H1 (cell line): ENCODE measurements at regions of chr1 and their contacts with region 1.

Region 1: DNA sequence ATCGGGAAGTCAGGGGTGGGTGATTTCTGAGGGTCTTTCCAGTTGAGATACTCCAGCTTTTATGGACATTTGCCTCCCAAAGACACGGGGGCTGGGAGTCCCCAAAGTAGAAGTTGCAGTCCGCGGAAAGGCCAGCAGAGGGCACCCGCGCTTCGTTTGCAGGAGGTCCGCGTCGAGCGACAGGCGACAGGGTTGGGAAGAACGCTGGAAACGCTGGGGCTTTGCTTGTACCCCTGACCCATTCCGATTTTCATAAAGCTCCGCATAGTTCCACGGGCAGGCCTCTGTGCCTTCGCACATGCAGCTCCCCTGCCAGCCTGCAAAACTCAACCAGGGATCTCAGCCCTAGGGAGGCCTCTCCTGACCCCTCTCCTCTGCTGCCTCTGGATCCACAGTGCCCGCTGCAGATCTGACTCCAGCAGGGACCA is 44.2 kb upstream of the LAPTM5 start:
- DNase-seq: peak in 1 of 2 experiments; percentile 99
- H3K4me3 ChIP-seq: peak overlapping the region in 1 of 4 experiments; percentile 43; a peak in 4 of 8 replicates
- H3K27ac ChIP-seq: no peak overlapping the region
- H3K4me1 ChIP-seq: peaks cover 10 to 30% (median 17%) of the 10 kb centered on the region in 4 experiments
- H3K27me3 ChIP-seq: peaks cover 0 to 13% (median 4%) of the 10 kb centered on the region in 4 experiments; a peak in 2 of 7 replicates
- CTCF ChIP-seq: peak; percentile 94 to 96 (median 95)
- EP300 ChIP-seq: no peak
- POLR2A ChIP-seq: no peak
- RAD21 ChIP-seq: peak; percentile 97 to 100

Region 2: GRCh38 chr1:30724175-30724574 is 77.6 kb before region 1 on chr1:
- CTCF ChIA-PET with region 1: interaction called, 48 read pairs
- POLR2A ChIA-PET with region 1: interaction called, 3 read pairs
- DNase-seq: no peak
- H3K4me3 ChIP-seq: no peak overlapping the region
- H3K27ac ChIP-seq: no peak overlapping the region
- H3K4me1 ChIP-seq: peaks cover 0 to 9% (median 2%) of the 10 kb centered on the region in 4 experiments; a peak in 4 of 7 replicates
- H3K27me3 ChIP-seq: no peaks in the 10 kb centered on the region; a peak in 1 of 7 replicates
- CTCF ChIP-seq: peak in 2 of 3 experiments; percentile 21 to 52; a peak in 1 of 4 replicates
- EP300 ChIP-seq: no peak
- POLR2A ChIP-seq: no peak
- RAD21 ChIP-seq: peak in 1 of 2 experiments; percentile 3; a peak in 1 of 4 replicates

Region 3: DNA sequence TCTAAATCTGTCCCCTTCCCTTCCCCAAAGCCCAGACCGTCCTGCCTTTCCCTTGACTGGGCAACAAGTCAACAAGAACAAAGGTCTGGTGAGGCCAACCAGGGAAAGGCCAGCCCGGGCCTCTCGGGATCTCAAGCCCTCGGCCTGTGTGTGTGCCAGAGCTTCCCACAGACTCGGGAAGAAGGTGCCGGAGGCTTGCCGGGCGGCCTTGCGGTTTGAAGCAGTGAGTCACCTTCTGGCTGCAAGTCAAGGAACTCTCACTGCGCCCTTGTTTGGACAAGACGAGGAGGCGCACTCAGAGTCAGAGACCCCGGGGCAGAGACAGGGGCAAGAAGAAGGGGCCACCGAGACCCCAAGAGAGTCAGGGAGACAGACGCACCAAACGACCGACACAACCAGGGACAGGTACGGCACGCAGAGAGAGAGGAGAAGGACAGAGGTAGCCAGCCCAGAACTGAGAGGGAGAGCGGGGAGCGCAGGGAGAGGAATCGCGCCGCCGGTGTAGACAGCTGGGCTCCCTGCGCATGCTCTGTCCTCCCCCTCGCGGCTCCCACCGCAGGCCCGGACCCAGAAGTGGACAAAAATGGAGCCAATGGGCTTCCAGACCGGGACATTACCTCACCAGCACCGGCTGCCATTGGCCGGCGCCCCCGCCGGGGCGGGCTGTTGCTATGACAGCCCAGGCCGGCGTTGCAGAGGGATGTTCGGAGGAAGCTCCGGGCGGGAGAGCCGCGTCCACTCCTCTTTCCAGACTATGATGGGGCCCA is 22.4 kb after region 1 on chr1:
- CTCF ChIA-PET with region 1: interaction called, 158 read pairs
- POLR2A ChIA-PET with region 1: interaction called, 6 read pairs
- DNase-seq: peak; percentile 85 to 95
- H3K4me3 ChIP-seq: peak overlapping the region; percentile 43 to 68 (median 53)
- H3K27ac ChIP-seq: no peak overlapping the region
- H3K4me1 ChIP-seq: peaks cover 0 to 13% (median 8%) of the 10 kb centered on the region in 4 experiments; a peak in 6 of 7 replicates
- H3K27me3 ChIP-seq: peaks cover 0 to 17% (median 13%) of the 10 kb centered on the region in 4 experiments; a peak in 5 of 7 replicates
- CTCF ChIP-seq: peak in 1 of 3 experiments; percentile 2; a peak in 1 of 4 replicates
- EP300 ChIP-seq: no peak
- POLR2A ChIP-seq: no peak
- RAD21 ChIP-seq: peak in 1 of 2 experiments; percentile 15; a peak in 1 of 4 replicates

Region 4: DNA sequence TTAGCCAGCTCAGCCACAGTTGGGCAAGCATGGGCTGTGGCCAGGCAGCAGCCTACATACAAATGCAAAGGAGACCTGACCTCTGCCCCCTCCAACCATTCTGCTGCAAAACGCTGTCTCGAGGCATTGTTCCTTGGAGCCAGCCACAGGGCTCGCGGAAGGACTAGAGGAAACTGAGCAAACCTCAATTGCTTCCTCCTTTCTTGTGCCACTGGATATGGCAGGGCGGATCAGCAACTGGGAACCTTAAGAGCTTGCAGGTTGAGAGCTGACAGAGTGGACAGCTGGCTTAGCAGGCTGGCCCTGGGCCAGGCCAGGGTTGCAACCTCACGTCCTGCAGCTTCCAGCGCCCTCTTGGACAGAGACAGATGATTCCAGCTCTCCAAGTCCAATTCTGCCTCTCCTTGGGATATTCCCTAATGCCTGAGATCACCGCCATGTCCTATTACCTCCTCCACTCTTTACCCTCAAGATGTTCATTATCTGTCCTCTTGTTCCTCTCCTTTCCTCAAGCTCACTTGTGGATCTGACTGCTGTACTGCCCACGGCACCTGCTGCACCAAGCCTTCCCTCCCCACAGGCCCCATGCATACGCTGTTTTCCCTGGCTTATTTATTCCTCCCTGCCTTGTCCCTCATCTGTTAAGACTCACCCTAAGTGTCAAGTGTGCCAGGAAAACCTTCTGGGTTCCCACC is 39.3 kb after region 1 on chr1:
- CTCF ChIA-PET with region 1: interaction called, 52 read pairs
- POLR2A ChIA-PET with region 1: no interaction called
- DNase-seq: no peak
- H3K4me3 ChIP-seq: peak overlapping the region in 1 of 4 experiments; percentile 3; a peak in 1 of 8 replicates
- H3K27ac ChIP-seq: no peak overlapping the region
- H3K4me1 ChIP-seq: peaks cover 16 to 25% (median 18%) of the 10 kb centered on the region in 4 experiments
- H3K27me3 ChIP-seq: no peaks in the 10 kb centered on the region
- CTCF ChIP-seq: no peak
- EP300 ChIP-seq: no peak
- POLR2A ChIP-seq: no peak
- RAD21 ChIP-seq: no peak

Region 5: DNA sequence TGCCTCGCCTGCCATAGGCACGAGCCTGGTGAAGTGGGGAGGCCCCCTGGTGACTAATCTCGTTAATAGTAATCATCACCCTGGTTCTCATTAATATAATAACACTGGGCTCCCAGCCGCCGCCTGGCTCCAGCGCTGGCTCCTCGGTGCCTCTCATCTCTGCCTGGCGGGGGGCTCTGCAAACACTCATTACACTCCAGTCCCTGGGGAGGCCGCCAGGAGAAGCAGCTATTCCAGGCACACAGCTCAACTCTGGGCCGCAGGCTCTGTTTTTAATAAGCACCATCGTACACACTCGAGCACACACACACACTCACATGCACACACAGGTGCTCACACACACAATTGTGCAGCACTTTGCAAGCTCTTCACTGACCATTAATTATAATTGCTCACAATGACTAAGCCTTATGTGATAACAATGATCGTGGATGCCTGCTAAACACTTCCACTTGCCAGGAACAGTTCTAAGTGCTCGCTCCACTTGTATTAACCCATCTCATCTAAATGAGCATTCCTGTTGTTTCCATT is 54.5 kb after region 1 on chr1:
- CTCF ChIA-PET with region 1: interaction called, 57 read pairs
- POLR2A ChIA-PET with region 1: interaction called, 4 read pairs
- DNase-seq: no peak
- H3K4me3 ChIP-seq: no peak overlapping the region
- H3K27ac ChIP-seq: no peak overlapping the region
- H3K4me1 ChIP-seq: peaks cover 15 to 33% (median 24%) of the 10 kb centered on the region in 4 experiments
- H3K27me3 ChIP-seq: no peaks in the 10 kb centered on the region
- CTCF ChIP-seq: no peak
- EP300 ChIP-seq: no peak
- POLR2A ChIP-seq: no peak
- RAD21 ChIP-seq: no peak

Region 6: GRCh38 chr1:30877205-30877912 is 75.6 kb after region 1 on chr1:
- CTCF ChIA-PET with region 1: interaction called, 41 read pairs
- POLR2A ChIA-PET with region 1: interaction called, 3 read pairs
- DNase-seq: no peak
- H3K4me3 ChIP-seq: no peak overlapping the region
- H3K27ac ChIP-seq: no peak overlapping the region
- H3K4me1 ChIP-seq: peaks cover 3 to 13% (median 7%) of the 10 kb centered on the region in 4 experiments
- H3K27me3 ChIP-seq: no peaks in the 10 kb centered on the region; a peak in 1 of 7 replicates
- CTCF ChIP-seq: no peak
- EP300 ChIP-seq: no peak
- POLR2A ChIP-seq: no peak
- RAD21 ChIP-seq: no peak

Region 7: DNA sequence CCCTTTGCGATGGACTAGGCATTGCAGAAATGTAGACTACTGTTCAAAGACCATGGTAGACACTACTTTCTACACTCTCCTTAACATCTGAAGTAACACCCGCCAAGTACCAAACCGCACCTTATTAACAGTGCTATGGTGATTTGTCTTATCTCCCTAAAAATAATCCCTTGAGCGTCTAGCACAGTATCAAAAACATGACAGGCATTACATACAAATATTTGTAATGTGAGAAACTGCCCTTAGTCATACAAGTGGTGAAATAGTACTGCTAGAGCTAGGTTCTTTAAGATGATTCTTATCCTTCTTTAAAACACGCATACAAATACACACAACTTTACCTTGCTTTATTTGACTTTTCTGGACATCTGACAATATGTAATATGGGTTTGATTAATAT is 236.6 kb after region 1 on chr1:
- CTCF ChIA-PET with region 1: no interaction called
- POLR2A ChIA-PET with region 1: no interaction called
- DNase-seq: no peak
- H3K4me3 ChIP-seq: no peak overlapping the region
- H3K27ac ChIP-seq: no peak overlapping the region
- H3K4me1 ChIP-seq: peaks cover 0 to 7% (median under 1%) of the 10 kb centered on the region in 4 experiments; a peak in 1 of 7 replicates
- H3K27me3 ChIP-seq: no peaks in the 10 kb centered on the region
- CTCF ChIP-seq: no peak
- EP300 ChIP-seq: no peak
- POLR2A ChIP-seq: no peak
- RAD21 ChIP-seq: no peak